GM12878 (cell line): ENCODE measurements at regions of chr10 and their contacts with region 1.

Region 1: DNA sequence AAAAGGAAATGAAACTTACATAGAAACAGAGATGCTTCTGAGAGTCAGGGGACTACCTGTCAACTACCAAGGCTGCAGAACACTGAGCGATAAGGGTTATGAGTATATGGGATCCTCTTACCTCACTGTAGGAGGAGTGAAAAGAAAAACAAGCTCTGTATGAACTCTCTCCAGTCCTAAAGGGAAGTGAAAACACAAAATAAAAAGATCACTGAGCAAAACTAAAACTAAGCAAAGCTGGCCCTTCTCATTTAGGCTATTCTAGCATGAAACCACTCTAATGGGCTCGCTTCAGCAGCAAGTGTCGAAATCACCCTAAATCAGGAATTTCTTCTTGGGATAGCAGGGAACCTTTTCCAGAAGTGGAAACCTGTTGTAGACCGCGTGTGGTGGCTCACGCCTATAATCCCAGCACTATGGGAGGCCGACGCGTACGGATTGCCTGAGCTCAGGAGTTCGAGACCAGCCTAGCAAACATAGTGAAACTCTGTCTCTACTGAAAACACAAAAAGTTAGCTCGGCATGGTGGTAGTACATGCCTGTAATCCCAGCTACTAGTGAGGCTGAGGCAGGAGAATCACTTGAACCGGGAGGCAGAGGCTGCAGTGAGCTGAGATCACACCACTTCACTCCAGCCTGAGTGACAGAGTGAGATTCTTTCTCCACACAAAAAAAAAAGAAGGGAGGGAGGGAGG is 27.0 kb downstream of the DCLRE1C start:
- DNase-seq: peak; percentile 74
- ATAC-seq: peak; percentile 99
- H3K4me3 ChIP-seq: peak overlapping the region; percentile 60; the same call in 1 of the 2 replicates
- H3K27ac ChIP-seq: peak overlapping the region; percentile 63
- H3K4me1 ChIP-seq: peaks cover 22% of the 10 kb centered on the region
- H3K27me3 ChIP-seq: no peaks in the 10 kb centered on the region
- CTCF ChIP-seq: no peak
- EP300 ChIP-seq: peak in 1 of 2 experiments; percentile 73; a peak in 2 of 4 replicates
- POLR2A ChIP-seq: no peak
- RAD21 ChIP-seq: no peak

Region 2: GRCh38 chr10:14536241-14537213 is 390.3 kb before region 1 on chr10:
- CTCF ChIA-PET with region 1: no interaction called
- POLR2A ChIA-PET with region 1: no interaction called
- RAD21 ChIA-PET with region 1: no interaction called
- SMC1A ChIA-PET with region 1: no interaction called
- in situ Hi-C with region 1: no loop called
- intact Hi-C with region 1: loop called (anchors 1 kb)
- DNase-seq: no peak
- ATAC-seq: peak; percentile 88
- H3K4me3 ChIP-seq: no peak overlapping the region
- H3K27ac ChIP-seq: no peak overlapping the region
- H3K4me1 ChIP-seq: peaks cover 3% of the 10 kb centered on the region; the same call in 1 of the 2 replicates
- H3K27me3 ChIP-seq: no peaks in the 10 kb centered on the region
- CTCF ChIP-seq: peak; percentile 65 to 69 (median 66); a peak in 5 of 6 replicates
- EP300 ChIP-seq: no peak
- POLR2A ChIP-seq: no peak
- RAD21 ChIP-seq: peak; percentile 71

Region 3: GRCh38 chr10:14904316-14904732 is 22.5 kb before region 1 on chr10:
- CTCF ChIA-PET with region 1: interaction called, 11 read pairs
- POLR2A ChIA-PET with region 1: interaction called, 9 read pairs
- RAD21 ChIA-PET with region 1: interaction called, 4 read pairs
- SMC1A ChIA-PET with region 1: interaction called, 8 read pairs
- in situ Hi-C with region 1: no loop called
- intact Hi-C with region 1: no loop called
- DNase-seq: no peak
- ATAC-seq: peak; percentile 88
- H3K4me3 ChIP-seq: no peak overlapping the region
- H3K27ac ChIP-seq: no peak overlapping the region
- H3K4me1 ChIP-seq: no peaks in the 10 kb centered on the region
- H3K27me3 ChIP-seq: no peaks in the 10 kb centered on the region
- CTCF ChIP-seq: peak; percentile 41 to 57 (median 51)
- EP300 ChIP-seq: no peak
- POLR2A ChIP-seq: no peak
- RAD21 ChIP-seq: peak; percentile 31; the same call in 1 of the 2 replicates

Region 4: DNA sequence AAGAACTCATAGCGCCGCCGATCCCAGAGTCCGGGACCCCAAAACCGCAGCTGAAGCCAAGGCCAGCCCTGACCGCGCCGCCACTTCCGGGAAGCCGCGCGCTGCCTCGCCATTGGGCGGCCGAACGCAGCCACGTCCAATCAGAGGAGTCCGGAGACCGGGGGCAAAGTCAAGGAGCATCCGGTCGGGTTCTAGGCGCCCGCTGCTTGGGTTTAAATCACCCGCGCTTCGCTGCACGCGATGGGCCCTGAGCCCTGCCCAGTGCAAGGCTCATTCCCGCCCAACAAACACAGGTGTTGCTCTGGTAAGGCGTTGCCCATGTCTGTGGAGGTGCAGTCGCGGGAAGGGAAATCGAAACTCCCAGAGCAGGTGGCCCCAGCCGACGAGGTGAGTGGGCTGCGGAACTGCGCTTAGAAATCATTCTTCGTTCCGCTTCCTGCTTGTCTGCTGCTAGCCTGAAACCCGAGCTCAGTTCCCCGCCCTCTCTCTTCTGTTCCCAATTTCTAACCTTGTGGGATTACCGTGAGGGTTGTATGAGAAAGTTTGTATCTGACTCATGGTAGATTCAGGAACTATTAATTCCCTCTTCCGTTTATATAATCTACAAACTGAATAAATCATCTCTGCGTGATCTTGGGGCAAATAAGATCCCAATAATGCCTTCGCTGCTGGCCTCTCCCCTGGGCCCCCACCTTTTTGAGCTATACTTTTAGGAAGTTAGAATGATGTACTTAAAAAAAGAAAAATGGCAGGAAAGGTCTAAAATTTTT is 27.3 kb after region 1 on chr10 and contains the start of gene DCLRE1C:
- CTCF ChIA-PET with region 1: interaction called, 15 read pairs
- POLR2A ChIA-PET with region 1: interaction called, 4 read pairs
- RAD21 ChIA-PET with region 1: interaction called, 18 read pairs
- SMC1A ChIA-PET with region 1: interaction called, 6 read pairs
- in situ Hi-C with region 1: no loop called
- intact Hi-C with region 1: loop called (anchors 1 kb)
- DNase-seq: peak; percentile 82
- ATAC-seq: peak; percentile 86
- H3K4me3 ChIP-seq: peak within 1 kb of the TSS; percentile 91
- H3K27ac ChIP-seq: peak within 1 kb of the TSS; percentile 98
- H3K4me1 ChIP-seq: peaks cover 21% of the 10 kb centered on the region
- H3K27me3 ChIP-seq: no peaks in the 10 kb centered on the region
- CTCF ChIP-seq: no peak
- EP300 ChIP-seq: peak in 1 of 2 experiments; percentile 56; a peak in 2 of 4 replicates
- POLR2A ChIP-seq: peak; percentile 80
- RAD21 ChIP-seq: no peak
- polyA plus RNA-seq, gene DCLRE1C: 15.7 to 26.2 TPM